Activated T-helper 1 cell treated with anti-CD3 and anti-CD28 coated beads, Interleukin-12 subunit alpha, Interleukin-12 subunit beta, Interleukin-2, Interleukin-4 antibody, amounts not matched to agents 30 ng/mL and 10 ng/mL and 1 ng/mL, durations not matched to agents 14 hours and 24 hours and 36 hours (primary cell): ENCODE measurements at regions of chrX and their contacts with region 1.

Region 1: DNA sequence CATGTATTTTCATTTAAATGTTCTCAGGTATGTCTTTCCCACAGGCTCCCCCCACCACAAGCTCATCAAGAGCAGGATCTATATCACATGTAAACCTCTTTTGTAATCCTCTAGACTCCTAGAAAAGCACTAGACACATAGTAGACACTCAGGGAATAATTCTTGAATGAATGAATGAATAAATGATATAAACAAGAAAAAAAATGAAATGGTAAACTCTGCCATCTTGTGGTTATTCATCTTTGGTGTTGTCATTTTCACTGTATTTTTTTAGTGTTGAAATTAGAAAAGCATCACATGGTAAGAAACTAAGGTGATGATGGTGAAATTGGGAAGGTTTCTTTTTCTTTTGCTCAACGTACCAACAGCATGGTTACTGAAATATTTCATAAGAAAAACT is 34.2 kb upstream of the C1GALT1C1 start:
- DNase-seq: no peak
- H3K4me3 Mint-ChIP-seq: no peak overlapping the region
- H3K27ac Mint-ChIP-seq: no peak overlapping the region
- H3K4me1 Mint-ChIP-seq: no peaks in the 10 kb centered on the region
- H3K27me3 Mint-ChIP-seq: no peaks in the 10 kb centered on the region

Region 2: GRCh38 chrX:120514236-120514635 is 149.8 kb before region 1 on chrX:
- intact Hi-C with region 1: loop called (anchors 1 kb)
- DNase-seq: no peak
- H3K4me3 Mint-ChIP-seq: no peak overlapping the region
- H3K27ac Mint-ChIP-seq: no peak overlapping the region
- H3K4me1 Mint-ChIP-seq: no peaks in the 10 kb centered on the region
- H3K27me3 Mint-ChIP-seq: no peaks in the 10 kb centered on the region

Region 3: DNA sequence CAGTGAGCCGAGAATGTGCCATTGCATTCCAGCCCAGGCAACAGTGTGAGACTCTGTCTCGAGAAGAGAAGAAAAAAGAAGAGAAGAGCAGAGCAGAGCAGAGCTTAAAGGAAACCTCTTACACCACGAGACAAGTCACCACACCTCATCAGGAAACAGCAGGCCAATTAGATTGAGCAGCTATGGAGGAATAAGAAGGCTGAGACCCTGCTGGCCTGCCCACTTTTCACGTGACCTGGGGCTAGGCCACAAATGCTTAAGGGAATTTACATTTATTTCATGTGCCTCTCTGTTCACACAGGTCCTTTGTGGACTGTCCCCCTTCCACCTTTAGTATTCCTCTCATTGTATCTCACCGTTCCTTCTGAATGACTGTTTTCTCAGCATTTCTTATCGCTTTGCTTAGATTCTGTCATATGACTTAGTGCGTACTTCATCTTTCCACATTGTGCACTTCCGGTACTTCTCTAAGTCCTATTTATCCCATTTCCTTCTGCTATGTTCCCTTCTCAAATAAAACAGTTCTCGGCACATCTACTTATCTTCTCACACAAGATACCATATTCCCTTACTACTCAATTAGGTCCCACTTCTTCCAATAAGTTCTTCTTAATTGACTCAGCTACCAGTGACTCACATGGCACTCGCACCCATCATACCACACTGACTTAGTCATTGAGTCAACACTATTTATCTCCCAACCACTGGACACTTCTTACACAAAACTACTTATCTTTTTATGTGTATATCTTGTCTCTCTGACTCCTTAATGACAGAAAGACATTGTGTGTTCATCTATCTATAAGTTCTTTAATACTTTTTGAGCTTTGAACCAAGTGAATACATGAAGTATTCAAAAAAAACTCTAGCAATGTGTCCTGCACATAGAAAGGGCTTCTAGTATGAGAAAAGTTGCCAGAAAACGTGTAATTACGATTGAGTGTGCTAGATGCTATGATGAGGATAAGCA is 114.3 kb before region 1 on chrX:
- intact Hi-C with region 1: no loop called
- DNase-seq: no peak
- H3K4me3 Mint-ChIP-seq: no peak overlapping the region
- H3K27ac Mint-ChIP-seq: peak overlapping the region; percentile 41
- H3K4me1 Mint-ChIP-seq: peaks cover 10% of the 10 kb centered on the region
- H3K27me3 Mint-ChIP-seq: no peaks in the 10 kb centered on the region